ENCODE measurements at regions of chr9 and their contacts with region 1.

Region 1: DNA sequence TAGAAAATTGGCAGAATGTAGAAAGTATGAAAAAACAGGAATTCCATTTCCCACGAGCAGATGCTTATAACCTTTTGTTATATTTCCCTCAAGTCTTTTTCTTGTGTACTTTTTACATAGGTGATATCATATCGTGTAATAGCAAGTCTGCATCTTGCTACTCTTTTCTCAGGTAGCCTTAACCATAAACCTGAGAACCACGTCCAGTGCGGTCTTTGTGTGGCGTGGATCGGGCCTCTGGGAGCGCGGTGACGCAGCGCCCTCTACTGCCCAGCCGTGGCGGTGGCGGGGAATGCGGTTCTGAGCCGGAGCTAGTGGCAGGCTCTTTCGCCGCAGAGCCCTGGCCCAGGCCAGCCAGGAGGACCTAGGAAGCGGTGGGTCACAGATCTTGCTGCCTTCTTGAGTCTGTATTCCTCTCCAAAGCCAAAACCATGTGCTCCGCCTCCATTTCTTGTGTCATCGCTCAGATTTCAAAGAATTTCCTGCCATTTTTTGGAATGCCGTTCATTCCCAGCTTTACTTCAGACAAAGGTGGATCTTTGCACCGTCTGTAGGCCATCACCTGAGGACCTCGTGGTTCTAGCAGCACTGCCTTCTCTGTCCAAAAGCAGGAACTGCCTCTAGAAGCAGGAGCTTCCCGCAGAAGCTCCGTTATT is 71.9 kb downstream of the MVB12B start:
- DNase-seq: peak; percentile 80 to 92 (median 86)
- H3K4me3 ChIP-seq: peak overlapping the region in 1 of 59 donors; percentile 7
- H3K27ac ChIP-seq: peak overlapping the region in 57 of 59 donors; percentile 19 to 99 (median 81)
- H3K27me3 ChIP-seq: no peaks in the 10 kb centered on the region
- CTCF ChIP-seq: peak; percentile 86 to 99 (median 98)

Region 2: GRCh38 chr9:125558453-125559092 is 840.0 kb before region 1 on chr9:
- intact Hi-C with region 1: loop called in 1 of 2 experiments (anchors 5 kb)
- DNase-seq: peak in 6 of 10 donors; percentile 32 to 81 (median 54)
- H3K4me3 ChIP-seq: no peak overlapping the region
- H3K27ac ChIP-seq: peak overlapping the region in 17 of 59 donors; percentile 2 to 58 (median 22)
- H3K27me3 ChIP-seq: no peaks in the 10 kb centered on the region
- CTCF ChIP-seq: peak; percentile 68 to 92 (median 83)

Region 3: GRCh38 chr9:125889476-125890419 is 508.8 kb before region 1 on chr9:
- intact Hi-C with region 1: loop called in 1 of 2 experiments (anchors 10 kb)
- DNase-seq: peak; percentile 18 to 76 (median 55)
- H3K4me3 ChIP-seq: peak overlapping the region; percentile 40 to 77 (median 63)
- H3K27ac ChIP-seq: peak overlapping the region in 58 of 59 donors; percentile 10 to 89 (median 77)
- H3K27me3 ChIP-seq: no peaks in the 10 kb centered on the region
- CTCF ChIP-seq: peak in 4 of 56 donors; percentile 9 to 19 (median 16)

Region 4: GRCh38 chr9:126228781-126229444 is 169.6 kb before region 1 on chr9:
- intact Hi-C with region 1: loop called in 1 of 2 experiments (anchors 5 kb)
- DNase-seq: peak; percentile 66 to 86 (median 79)
- H3K4me3 ChIP-seq: no peak overlapping the region
- H3K27ac ChIP-seq: peak overlapping the region in 6 of 59 donors; percentile 12 to 62 (median 36)
- H3K27me3 ChIP-seq: peaks cover 0 to 2% (median 0%) of the 10 kb centered on the region in 45 donors
- CTCF ChIP-seq: peak; percentile 85 to 100 (median 96)

Region 5: GRCh38 chr9:126366366-126367011 is 32.0 kb before region 1 on chr9:
- intact Hi-C with region 1: no loop called
- DNase-seq: peak; percentile 37 to 88 (median 74)
- H3K4me3 ChIP-seq: peak overlapping the region in 8 of 59 donors; percentile 16 to 33 (median 22)
- H3K27ac ChIP-seq: peak overlapping the region; percentile 61 to 99 (median 92)
- H3K27me3 ChIP-seq: no peaks in the 10 kb centered on the region
- CTCF ChIP-seq: no peak

Region 6: DNA sequence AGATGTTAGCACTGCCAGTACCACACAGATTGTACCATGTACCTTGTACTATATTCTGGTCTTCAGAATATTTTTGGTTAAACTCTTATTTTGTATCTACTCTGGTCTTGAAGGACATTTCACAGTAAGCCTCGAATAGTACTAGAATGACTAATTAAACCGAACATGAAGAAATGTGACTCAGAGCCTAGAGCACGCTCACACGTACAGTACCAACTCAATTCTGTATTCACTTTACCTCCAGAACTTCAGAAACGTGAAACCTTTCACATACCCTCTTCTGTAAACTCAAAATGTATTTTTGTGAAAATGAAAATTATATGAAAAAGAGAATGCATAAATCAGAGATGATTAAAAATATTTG is 40.9 kb after region 1 on chr9:
- intact Hi-C with region 1: loop called in 1 of 2 experiments (anchors 5 kb)
- DNase-seq: no peak
- H3K4me3 ChIP-seq: no peak overlapping the region
- H3K27ac ChIP-seq: peak overlapping the region in 55 of 59 donors; percentile 33 to 94 (median 82)
- H3K27me3 ChIP-seq: no peaks in the 10 kb centered on the region
- CTCF ChIP-seq: no peak

Measured in dorsolateral prefrontal cortex (tissue), 120 donors.